ENCODE measurements at regions of chr12 and their contacts with region 1.

Region 1: GRCh38 chr12:57771708-57772428 is at the start of gene METTL1:
- DNase-seq: peak; percentile 94 to 96
- H3K4me3 ChIP-seq: peak within 1 kb of the TSS; percentile 82
- H3K4me3 Mint-ChIP-seq: peak within 1 kb of the TSS; percentile 88
- H3K27ac Mint-ChIP-seq: peak within 1 kb of the TSS; percentile 97
- H3K4me1 ChIP-seq: peaks cover 15% of the 10 kb centered on the region
- H3K4me1 Mint-ChIP-seq: peaks cover 8% of the 10 kb centered on the region
- H3K27me3 ChIP-seq: no peaks in the 10 kb centered on the region
- H3K27me3 Mint-ChIP-seq: no peaks in the 10 kb centered on the region
- CTCF ChIP-seq: no peak
- total RNA-seq, gene METTL1: 34.1 and 37.8 TPM in 2 replicates

Region 2: DNA sequence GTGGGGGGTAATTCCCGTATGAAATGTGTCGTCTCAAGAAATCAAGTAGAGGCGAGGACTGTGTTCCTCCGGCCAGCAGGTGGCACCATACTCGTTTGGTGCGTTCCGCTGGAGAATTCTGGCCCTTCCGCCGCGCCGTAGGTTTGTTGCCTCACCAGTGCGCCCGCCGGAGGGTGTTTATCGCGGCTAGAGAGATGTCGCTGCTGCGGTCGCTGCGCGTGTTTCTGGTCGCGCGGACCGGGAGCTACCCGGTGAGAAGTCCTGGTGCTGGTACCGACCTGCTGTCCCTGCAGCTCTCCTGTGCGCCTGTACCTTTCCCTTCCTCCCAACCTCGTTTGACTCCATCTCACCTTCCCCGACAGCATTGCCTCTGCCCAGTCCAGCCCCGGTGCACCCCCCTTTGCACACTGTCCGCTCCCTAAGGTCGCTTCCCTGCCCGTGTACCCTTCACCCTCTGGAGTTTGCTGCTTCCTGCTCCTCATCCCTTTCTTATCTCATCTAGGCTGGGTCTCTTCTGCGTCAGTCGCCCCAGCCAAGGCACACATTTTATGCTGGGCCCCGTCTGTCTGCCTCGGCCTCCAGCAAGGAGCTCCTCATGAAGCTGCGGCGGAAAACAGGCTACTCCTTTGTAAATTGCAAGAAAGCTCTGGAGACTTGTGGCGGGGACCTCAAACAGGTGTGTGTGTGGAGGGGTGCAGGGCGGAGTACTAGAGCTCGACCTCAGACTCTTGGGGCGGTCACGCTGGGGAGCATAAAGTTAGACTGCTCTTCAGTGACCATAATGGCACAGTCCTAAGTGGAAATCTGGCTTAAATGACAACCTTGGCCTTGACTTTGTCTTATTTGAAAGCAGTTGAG is 11.0 kb after region 1 on chr12 and contains the start of gene TSFM:
- CTCF ChIA-PET with region 1: interaction called, 4 read pairs
- POLR2A ChIA-PET with region 1: interaction called, 7 read pairs
- intact Hi-C with region 1: loop called (anchors 1 kb)
- DNase-seq: peak; percentile 93 to 94
- H3K4me3 ChIP-seq: peak within 1 kb of the TSS; percentile 99
- H3K4me3 Mint-ChIP-seq: peak within 1 kb of the TSS; percentile 92
- H3K27ac Mint-ChIP-seq: peak within 1 kb of the TSS; percentile 91
- H3K4me1 ChIP-seq: no peaks in the 10 kb centered on the region
- H3K4me1 Mint-ChIP-seq: no peaks in the 10 kb centered on the region
- H3K27me3 ChIP-seq: no peaks in the 10 kb centered on the region
- H3K27me3 Mint-ChIP-seq: no peaks in the 10 kb centered on the region
- CTCF ChIP-seq: peak; percentile 74 to 81
- total RNA-seq, gene TSFM: 48.0 and 57.5 TPM in 2 replicates